ENCODE measurements at regions of chr6 and their contacts with region 1.

Region 1: GRCh38 chr6:32177788-32178546 is at the start of gene RNF5:
- DNase-seq: peak; percentile 99
- ATAC-seq: peak; percentile 79
- H3K4me3 ChIP-seq: peak within 1 kb of the TSS; percentile 68 to 92 (median 75)
- H3K4me3 Mint-ChIP-seq: peak within 1 kb of the TSS; percentile 97
- H3K27ac ChIP-seq: peak within 1 kb of the TSS; percentile 97 to 98
- H3K27ac Mint-ChIP-seq: peak within 1 kb of the TSS; percentile 99
- H3K4me1 ChIP-seq: peaks cover 34 to 47% of the 10 kb centered on the region in 2 donors
- H3K4me1 Mint-ChIP-seq: peaks cover 68% of the 10 kb centered on the region
- H3K27me3 ChIP-seq: no peaks in the 10 kb centered on the region
- H3K27me3 Mint-ChIP-seq: no peaks in the 10 kb centered on the region
- CTCF ChIP-seq: no peak
- total RNA-seq, gene RNF5: 39.0 and 40.7 TPM in 2 replicates

Region 2: GRCh38 chr6:32127717-32128592 is 50.0 kb before region 1 on chr6 and contains the start of gene ATF6B:
- CTCF ChIA-PET with region 1: interaction called, 4 read pairs
- POLR2A ChIA-PET with region 1: interaction called, 8 read pairs
- intact Hi-C with region 1: loop called (anchors 1 kb)
- DNase-seq: peak; percentile 98
- ATAC-seq: peak; percentile 92
- H3K4me3 ChIP-seq: peak within 1 kb of the TSS; percentile 82 to 100 (median 99)
- H3K4me3 Mint-ChIP-seq: peak within 1 kb of the TSS; percentile 98
- H3K27ac ChIP-seq: peak within 1 kb of the TSS; percentile 62 to 91
- H3K27ac Mint-ChIP-seq: peak within 1 kb of the TSS; percentile 95
- H3K4me1 ChIP-seq: peaks cover 26 to 36% of the 10 kb centered on the region in 2 donors
- H3K4me1 Mint-ChIP-seq: peaks cover 48% of the 10 kb centered on the region
- H3K27me3 ChIP-seq: no peaks in the 10 kb centered on the region
- H3K27me3 Mint-ChIP-seq: no peaks in the 10 kb centered on the region
- CTCF ChIP-seq: no peak
- total RNA-seq, gene ATF6B: 201 and 206 TPM in 2 replicates

Region 3: GRCh38 chr6:32190054-32190851 is 12.3 kb after region 1 on chr6 and contains the start of gene PBX2:
- CTCF ChIA-PET with region 1: interaction called, 7 read pairs
- POLR2A ChIA-PET with region 1: interaction called, 25 read pairs
- intact Hi-C with region 1: loop called (anchors 1 kb)
- DNase-seq: peak; percentile 93
- ATAC-seq: peak; percentile 86
- H3K4me3 ChIP-seq: peak within 1 kb of the TSS; percentile 74 to 99 (median 95)
- H3K4me3 Mint-ChIP-seq: peak within 1 kb of the TSS; percentile 91
- H3K27ac ChIP-seq: peak within 1 kb of the TSS; percentile 93 to 97
- H3K27ac Mint-ChIP-seq: peak within 1 kb of the TSS; percentile 96
- H3K4me1 ChIP-seq: peaks cover 55 to 74% of the 10 kb centered on the region in 2 donors
- H3K4me1 Mint-ChIP-seq: peaks cover 80% of the 10 kb centered on the region
- H3K27me3 ChIP-seq: no peaks in the 10 kb centered on the region
- H3K27me3 Mint-ChIP-seq: no peaks in the 10 kb centered on the region
- CTCF ChIP-seq: no peak
- total RNA-seq, gene PBX2: 180 and 188 TPM in 2 replicates

Measured in B cell (primary cell).